ENCODE measurements at regions of chr7 and their contacts with region 1.

Region 1: DNA sequence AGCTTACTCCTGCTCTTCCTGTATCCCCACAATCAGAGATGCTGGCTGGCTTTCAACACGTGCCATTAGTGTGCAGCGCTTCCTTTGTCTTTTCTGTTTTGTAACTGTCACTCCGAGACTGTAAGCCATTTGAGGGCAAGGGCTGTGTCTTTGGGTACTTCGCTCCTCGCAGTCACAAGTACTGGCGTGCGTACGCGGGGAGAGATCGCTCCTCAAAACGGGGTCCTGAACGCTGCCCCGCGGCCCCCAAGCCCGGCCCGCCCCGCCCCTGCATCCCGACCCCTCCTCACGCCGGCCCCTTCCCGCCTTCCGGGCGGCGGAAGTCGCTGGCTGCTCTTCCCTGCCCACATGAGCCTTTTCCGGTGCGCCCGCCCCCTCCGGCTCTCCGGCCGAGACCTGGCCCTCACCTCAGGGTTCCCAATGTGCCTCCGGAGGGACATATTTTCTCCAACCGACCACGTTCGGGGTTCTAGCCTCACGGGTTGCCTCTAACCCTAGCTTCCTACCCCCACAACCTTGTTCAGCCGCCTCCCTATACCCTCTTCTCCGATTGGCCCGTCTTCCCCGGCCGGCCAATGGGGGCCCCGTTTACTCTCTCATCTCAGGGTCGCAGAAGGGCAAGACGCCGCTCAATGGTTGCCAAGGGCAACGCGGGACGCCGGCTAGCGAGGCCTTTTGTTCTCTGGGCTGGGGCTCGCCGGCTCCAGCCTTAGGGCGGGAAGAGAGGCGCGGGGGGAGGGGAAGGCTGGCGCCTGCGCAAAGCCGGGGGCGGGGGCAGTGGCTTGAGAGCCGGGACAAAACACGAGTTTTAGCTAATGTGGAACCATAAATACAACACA is at the start of gene CEP41:
- DNase-seq: peak; percentile 99
- H3K4me3 ChIP-seq: peak within 1 kb of the TSS; percentile 72
- H3K4me3 Mint-ChIP-seq: peak within 1 kb of the TSS; percentile 99
- H3K27ac Mint-ChIP-seq: peak within 1 kb of the TSS; percentile 100
- H3K4me1 ChIP-seq: peaks cover 10% of the 10 kb centered on the region
- H3K4me1 Mint-ChIP-seq: no peaks in the 10 kb centered on the region
- H3K27me3 ChIP-seq: no peaks in the 10 kb centered on the region
- H3K27me3 Mint-ChIP-seq: no peaks in the 10 kb centered on the region
- CTCF ChIP-seq: no peak
- total RNA-seq, gene CEP41: 14.3 and 14.9 TPM in 2 replicates

Region 2: GRCh38 chr7:130356121-130356875 is 84.4 kb before region 1 on chr7:
- CTCF ChIA-PET with region 1: no interaction called
- POLR2A ChIA-PET with region 1: no interaction called
- intact Hi-C with region 1: loop called (anchors 2 kb)
- DNase-seq: peak; percentile 89 to 93
- H3K4me3 ChIP-seq: no peak overlapping the region
- H3K4me3 Mint-ChIP-seq: peak overlapping the region; percentile 18
- H3K27ac Mint-ChIP-seq: peak overlapping the region; percentile 85
- H3K4me1 ChIP-seq: peaks cover 38% of the 10 kb centered on the region
- H3K4me1 Mint-ChIP-seq: peaks cover 27% of the 10 kb centered on the region
- H3K27me3 ChIP-seq: no peaks in the 10 kb centered on the region
- H3K27me3 Mint-ChIP-seq: no peaks in the 10 kb centered on the region
- CTCF ChIP-seq: no peak

Region 3: DNA sequence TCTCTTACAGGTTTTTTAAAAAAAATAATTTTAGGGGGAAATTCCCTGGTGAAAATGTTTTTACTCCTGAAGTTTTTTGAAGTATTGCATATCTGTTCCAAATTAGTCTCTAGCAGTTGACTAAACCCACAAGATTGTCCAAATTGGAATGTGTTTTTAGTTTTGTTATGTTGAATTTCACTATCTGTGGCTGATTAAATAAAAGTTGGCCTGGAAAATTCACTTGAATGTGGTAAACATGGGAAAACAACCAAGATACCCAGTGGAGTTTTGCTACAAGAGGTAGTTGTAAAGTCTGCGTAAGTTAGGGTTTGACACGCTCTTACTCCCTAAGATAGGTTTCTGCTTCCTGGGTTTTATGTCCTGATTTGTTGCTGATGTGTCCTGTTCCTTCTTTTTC is 242.3 kb after region 1 on chr7:
- CTCF ChIA-PET with region 1: no interaction called
- POLR2A ChIA-PET with region 1: no interaction called
- intact Hi-C with region 1: no loop called
- DNase-seq: no peak
- H3K4me3 ChIP-seq: no peak overlapping the region
- H3K4me3 Mint-ChIP-seq: no peak overlapping the region
- H3K27ac Mint-ChIP-seq: no peak overlapping the region
- H3K4me1 ChIP-seq: no peaks in the 10 kb centered on the region
- H3K4me1 Mint-ChIP-seq: no peaks in the 10 kb centered on the region
- H3K27me3 ChIP-seq: no peaks in the 10 kb centered on the region
- H3K27me3 Mint-ChIP-seq: peaks cover 10% of the 10 kb centered on the region
- CTCF ChIP-seq: no peak

Region 4: DNA sequence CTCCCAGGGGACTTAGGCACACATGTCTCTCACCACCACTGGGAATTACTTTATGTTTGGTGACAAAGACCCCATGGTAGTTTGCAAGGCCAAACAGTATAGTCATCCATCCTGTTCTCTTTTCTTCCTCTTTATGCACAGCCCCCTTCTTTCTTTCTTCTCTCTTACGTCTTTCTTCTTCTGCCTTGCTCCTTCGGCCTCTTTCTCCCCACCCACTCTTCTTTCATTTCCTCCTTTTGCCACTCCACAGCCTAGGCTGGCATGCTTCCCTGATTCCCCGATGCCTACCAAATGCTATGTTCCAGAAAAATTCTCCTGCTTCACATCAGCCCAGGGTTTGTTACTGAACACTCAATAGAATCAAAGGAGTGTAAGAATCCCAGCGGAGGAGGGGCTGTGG is 824.5 kb after region 1 on chr7:
- CTCF ChIA-PET with region 1: no interaction called
- POLR2A ChIA-PET with region 1: no interaction called
- intact Hi-C with region 1: loop called (anchors 5 kb)
- DNase-seq: no peak
- H3K4me3 ChIP-seq: no peak overlapping the region
- H3K4me3 Mint-ChIP-seq: no peak overlapping the region
- H3K27ac Mint-ChIP-seq: no peak overlapping the region
- H3K4me1 ChIP-seq: no peaks in the 10 kb centered on the region
- H3K4me1 Mint-ChIP-seq: no peaks in the 10 kb centered on the region
- H3K27me3 ChIP-seq: no peaks in the 10 kb centered on the region
- H3K27me3 Mint-ChIP-seq: peaks cover 2% of the 10 kb centered on the region
- CTCF ChIP-seq: no peak

Measured in Caco-2 (cell line).